HEK293 (cell line): ENCODE measurements at regions of chrX and their contacts with region 1.

Region 1: GRCh38 chrX:73916931-73917667 is 354.1 kb downstream of the CHIC1 start:
- H3K4me3 ChIP-seq: no peak overlapping the region
- H3K27ac ChIP-seq: peak overlapping the region; percentile 69
- H3K4me1 ChIP-seq: peaks cover 40% of the 10 kb centered on the region
- CTCF ChIP-seq: no peak

Region 2: GRCh38 chrX:73799888-73800287 is 117.2 kb before region 1 on chrX:
- CTCF ChIA-PET with region 1: no interaction called
- POLR2A ChIA-PET with region 1: no interaction called
- H3K4me3 ChIP-seq: no peak overlapping the region
- H3K27ac ChIP-seq: no peak overlapping the region
- H3K4me1 ChIP-seq: no peaks in the 10 kb centered on the region
- CTCF ChIP-seq: no peak

Region 3: DNA sequence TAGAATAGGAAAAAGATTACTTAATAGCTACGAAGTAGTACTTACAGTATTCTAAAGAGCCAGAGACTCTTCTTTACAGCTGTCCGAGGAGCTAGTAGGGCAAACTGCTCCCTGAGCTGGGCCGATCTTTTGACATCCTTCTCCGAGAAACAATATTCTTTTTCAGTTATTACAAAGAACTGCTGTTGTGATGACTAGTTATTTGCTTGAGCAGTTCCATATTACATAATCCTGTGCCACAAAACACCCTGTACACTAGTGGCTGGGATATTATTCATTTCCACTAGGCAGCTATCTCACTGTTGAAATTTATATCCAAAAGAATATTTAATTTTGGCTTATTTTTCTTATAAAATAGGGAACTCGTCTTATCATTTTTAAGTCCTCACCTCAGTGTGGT is 75.8 kb before region 1 on chrX:
- CTCF ChIA-PET with region 1: no interaction called
- POLR2A ChIA-PET with region 1: interaction called, 11 read pairs
- H3K4me3 ChIP-seq: peak overlapping the region; percentile 30
- H3K27ac ChIP-seq: peak overlapping the region; percentile 83
- H3K4me1 ChIP-seq: peaks cover 55% of the 10 kb centered on the region
- CTCF ChIP-seq: no peak

Region 4: GRCh38 chrX:73876911-73877310 is 40.2 kb before region 1 on chrX:
- CTCF ChIA-PET with region 1: no interaction called
- POLR2A ChIA-PET with region 1: no interaction called
- H3K4me3 ChIP-seq: no peak overlapping the region
- H3K27ac ChIP-seq: no peak overlapping the region
- H3K4me1 ChIP-seq: no peaks in the 10 kb centered on the region; the same call in 1 of the 2 replicates
- CTCF ChIP-seq: no peak

Region 5: DNA sequence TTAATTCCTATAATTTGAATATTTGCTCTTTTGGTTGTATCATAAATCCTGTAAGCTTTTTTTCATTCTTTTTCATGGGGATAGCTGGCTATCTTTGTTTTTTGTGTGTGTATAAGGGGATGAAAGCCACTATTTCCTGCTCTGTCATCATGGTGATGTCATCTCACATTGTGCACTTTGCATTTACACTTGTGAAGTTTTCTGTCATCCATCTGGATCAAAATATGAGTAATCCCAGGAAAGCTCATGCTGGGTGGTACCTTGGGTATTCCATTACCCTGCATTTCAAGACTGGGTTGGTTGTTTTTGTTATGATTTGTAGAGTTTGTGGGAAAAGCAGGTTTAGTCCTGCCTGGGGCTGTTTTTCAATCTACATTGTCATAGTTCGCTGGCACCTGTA is 13.2 kb after region 1 on chrX:
- CTCF ChIA-PET with region 1: interaction called, 6 read pairs
- POLR2A ChIA-PET with region 1: interaction called, 11 read pairs
- H3K4me3 ChIP-seq: no peak overlapping the region
- H3K27ac ChIP-seq: no peak overlapping the region
- H3K4me1 ChIP-seq: no peaks in the 10 kb centered on the region
- CTCF ChIP-seq: no peak

Region 6: DNA sequence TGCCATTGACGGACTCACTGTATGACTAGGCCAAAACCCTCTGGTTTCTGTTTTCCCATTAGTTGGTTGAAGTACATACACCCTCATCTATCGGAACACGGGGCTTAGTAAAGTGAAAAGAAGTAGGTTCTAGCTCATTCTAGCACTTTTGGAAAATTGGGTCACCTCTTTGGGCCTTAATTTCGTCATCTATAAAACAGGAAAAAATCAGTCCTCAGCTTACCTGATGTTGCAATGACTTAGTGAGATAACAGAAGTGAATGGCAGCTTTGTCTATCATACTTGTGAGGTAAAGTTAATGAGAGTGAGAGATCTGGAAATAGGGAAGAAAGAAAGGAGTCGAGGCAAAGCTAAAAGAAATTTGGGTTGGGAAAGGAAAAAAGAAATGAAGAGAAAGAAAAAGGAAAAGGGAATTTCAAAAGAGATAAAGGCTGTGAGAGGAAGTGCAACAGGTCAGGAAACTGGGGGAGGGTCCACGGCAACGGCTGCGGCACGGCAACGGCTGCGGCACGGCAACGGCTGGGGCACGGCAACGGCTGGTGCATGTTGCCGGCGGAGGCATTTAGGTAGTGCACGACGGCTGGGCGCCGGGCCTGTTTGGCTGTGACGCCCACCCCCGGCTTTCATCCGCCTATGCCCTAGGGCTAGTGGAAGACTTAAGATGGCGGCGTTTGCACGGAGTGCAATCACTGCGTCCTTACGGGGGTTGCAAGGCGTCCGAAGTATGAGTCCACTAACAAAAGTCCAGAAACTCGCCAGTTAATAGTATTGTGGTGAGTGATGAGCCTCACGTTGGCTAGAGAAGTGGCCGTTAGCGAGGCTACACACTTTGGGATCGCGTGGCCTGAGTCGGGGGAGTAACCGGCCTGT is 26.8 kb after region 1 on chrX:
- CTCF ChIA-PET with region 1: interaction called, 5 read pairs
- POLR2A ChIA-PET with region 1: interaction called, 19 read pairs
- H3K4me3 ChIP-seq: peak overlapping the region; percentile 80
- H3K27ac ChIP-seq: peak overlapping the region; percentile 98
- H3K4me1 ChIP-seq: peaks cover 12% of the 10 kb centered on the region
- CTCF ChIP-seq: peak; percentile 87